ENCODE measurements at regions of chr6 and their contacts with region 1.

Region 1: DNA sequence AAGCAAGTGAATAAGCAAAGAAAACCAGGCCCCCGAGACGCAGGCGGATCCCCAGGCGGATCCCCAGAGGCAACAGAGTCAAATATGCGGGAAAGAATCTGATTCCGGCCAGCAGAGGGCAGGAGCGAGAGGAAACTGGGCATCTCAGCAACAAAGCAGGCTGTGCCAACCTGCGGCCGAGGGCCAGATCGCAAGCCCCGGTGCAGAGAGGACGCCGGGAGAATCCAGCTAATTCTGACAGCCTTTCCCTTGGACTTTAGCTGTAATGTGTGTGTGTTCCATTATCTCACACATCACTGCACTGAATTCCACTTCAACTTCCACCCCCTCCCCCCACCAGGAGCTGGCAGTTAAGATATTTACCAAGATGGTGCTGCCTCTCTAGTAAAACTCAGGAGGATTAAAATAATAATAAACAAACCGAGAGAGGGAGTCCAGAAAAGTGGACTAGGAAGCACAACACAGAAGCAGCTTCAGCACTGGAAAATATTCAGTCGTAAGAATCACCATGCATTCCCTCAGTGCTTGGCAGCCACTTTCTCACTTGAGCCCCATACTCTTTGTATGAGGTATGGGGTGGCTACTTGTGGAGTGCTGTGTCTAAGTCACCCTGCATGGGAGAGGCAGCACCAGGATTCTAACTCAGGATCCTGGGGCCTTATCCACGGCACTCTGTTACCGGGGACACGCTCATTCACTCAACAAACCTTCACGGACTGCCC is 66.2 kb upstream of the SNX9 start:
- DNase-seq: peak; percentile 92
- ATAC-seq: peak; percentile 20
- H3K4me3 Mint-ChIP-seq: peak overlapping the region; percentile 11
- H3K27ac Mint-ChIP-seq: peak overlapping the region; percentile 89
- H3K4me1 Mint-ChIP-seq: peaks cover 89% of the 10 kb centered on the region
- H3K27me3 Mint-ChIP-seq: no peaks in the 10 kb centered on the region
- CTCF ChIP-seq: peak; percentile 83

Region 2: DNA sequence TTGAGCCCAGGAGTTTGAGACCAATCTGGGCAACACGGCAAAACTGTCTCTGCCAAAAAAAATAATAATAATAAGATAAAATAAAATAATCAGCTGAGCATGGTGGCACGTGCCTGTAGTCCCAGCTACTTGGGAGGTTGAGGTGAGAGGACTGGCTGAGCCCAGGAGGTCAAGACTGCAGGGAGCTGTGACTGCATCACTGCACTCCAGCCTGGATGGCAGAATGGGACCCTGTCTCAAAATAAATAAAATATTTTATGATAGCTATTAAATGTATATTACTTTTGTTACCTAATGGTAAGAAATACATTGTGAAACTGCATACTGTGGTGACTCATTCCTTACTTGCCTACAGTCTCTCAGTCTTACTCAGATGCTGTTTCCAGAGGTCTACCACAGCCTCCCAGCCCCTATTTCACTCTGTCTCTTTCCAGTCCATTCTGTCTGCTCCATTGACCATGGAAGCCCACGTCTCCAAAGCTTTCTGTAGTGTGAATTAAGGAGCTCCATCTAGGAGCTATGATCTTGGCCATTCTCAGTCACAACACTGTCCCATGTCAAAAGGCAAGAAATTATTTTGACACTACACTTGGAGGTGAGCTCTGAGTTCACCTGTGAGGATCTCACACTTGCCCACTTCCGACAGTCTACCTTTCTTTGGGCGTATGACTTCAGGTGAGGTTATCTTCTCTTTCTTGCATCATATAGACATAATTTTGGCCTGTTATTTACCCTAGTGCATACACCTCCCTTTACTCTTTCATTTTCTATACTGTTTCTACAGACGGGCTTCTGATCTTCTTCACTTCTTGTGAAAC is 43.8 kb after region 1 on chr6:
- CTCF ChIA-PET with region 1: interaction called, 26 read pairs
- POLR2A ChIA-PET with region 1: interaction called, 10 read pairs
- intact Hi-C with region 1: no loop called
- DNase-seq: peak; percentile 78
- ATAC-seq: peak; percentile 84
- H3K4me3 Mint-ChIP-seq: peak overlapping the region; percentile 26
- H3K27ac Mint-ChIP-seq: peak overlapping the region; percentile 83
- H3K4me1 Mint-ChIP-seq: peaks cover 68% of the 10 kb centered on the region
- H3K27me3 Mint-ChIP-seq: no peaks in the 10 kb centered on the region
- CTCF ChIP-seq: no peak

Region 3: DNA sequence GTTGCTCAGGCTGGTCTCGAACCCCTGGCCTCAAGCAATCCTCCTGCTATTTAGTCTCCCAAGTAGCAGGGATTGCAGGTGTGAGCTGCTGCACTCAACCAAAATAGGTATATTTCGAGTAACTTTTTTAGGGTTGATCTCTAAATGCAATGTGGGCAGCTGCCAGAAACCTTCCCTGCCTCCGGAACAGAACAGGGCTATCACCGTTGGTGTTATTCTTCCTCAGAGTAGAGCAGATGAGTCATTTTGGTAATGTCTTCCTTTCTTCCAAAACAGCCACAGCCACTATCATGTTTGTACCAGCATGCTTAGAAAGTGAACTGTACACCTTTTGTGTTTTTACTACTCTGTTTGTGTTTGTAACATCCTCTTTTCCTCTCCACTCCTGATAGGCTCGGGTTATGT is 110.3 kb after region 1 on chr6:
- CTCF ChIA-PET with region 1: interaction called, 66 read pairs
- POLR2A ChIA-PET with region 1: interaction called, 3 read pairs
- intact Hi-C with region 1: no loop called
- DNase-seq: no peak
- ATAC-seq: peak; percentile 70
- H3K4me3 Mint-ChIP-seq: no peak overlapping the region
- H3K27ac Mint-ChIP-seq: no peak overlapping the region
- H3K4me1 Mint-ChIP-seq: peaks cover 39% of the 10 kb centered on the region
- H3K27me3 Mint-ChIP-seq: no peaks in the 10 kb centered on the region
- CTCF ChIP-seq: no peak

Region 4: GRCh38 chr6:157885211-157885788 is 128.4 kb after region 1 on chr6:
- CTCF ChIA-PET with region 1: interaction called, 24 read pairs
- POLR2A ChIA-PET with region 1: interaction called, 5 read pairs
- intact Hi-C with region 1: loop called (anchors 5 kb)
- DNase-seq: peak; percentile 84
- ATAC-seq: peak; percentile 89
- H3K4me3 Mint-ChIP-seq: peak overlapping the region; percentile 33
- H3K27ac Mint-ChIP-seq: peak overlapping the region; percentile 93
- H3K4me1 Mint-ChIP-seq: peaks cover 71% of the 10 kb centered on the region
- H3K27me3 Mint-ChIP-seq: no peaks in the 10 kb centered on the region
- CTCF ChIP-seq: no peak

Measured in activated CD8-positive, alpha-beta T cell treated with anti-CD3 and anti-CD28 coated beads for 36 hours (primary cell).